Activated CD8-positive, alpha-beta T cell treated with anti-CD3 and anti-CD28 coated beads for 36 hours (primary cell): ENCODE measurements at regions of chr1 and their contacts with region 1.

Region 1: DNA sequence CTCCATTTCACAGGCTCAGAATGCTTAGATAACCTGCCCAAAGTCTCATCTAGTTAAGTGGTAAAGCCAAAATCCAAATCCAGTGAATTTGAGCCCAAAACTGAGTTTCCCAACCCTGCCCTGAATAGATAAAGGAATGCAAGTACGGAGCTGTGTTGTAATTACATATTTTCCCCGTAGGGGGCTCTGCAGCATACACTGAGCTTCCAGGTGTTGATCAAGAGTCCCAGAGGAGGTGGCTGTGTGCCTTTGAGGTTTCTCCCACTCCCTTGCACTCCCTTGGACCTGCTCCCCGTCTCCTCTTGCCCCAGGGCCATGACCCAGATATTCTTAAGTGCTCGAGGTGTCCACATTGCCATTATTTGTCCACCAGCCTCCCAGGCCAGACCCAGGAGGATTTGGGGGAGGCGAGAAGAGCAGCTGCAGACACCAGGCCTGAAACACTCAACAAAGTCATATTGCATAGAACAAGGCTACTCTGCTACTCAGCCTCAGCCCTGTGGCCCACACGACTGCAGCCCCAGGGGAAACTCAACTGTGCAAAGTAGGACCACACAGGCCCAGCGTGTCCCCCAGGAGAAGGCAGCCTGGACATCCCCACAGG is 18.4 kb upstream of the LY9 start:
- DNase-seq: peak; percentile 72
- ATAC-seq: peak; percentile 67
- H3K4me3 Mint-ChIP-seq: no peak overlapping the region
- H3K27ac Mint-ChIP-seq: peak overlapping the region; percentile 4
- H3K4me1 Mint-ChIP-seq: peaks cover 55% of the 10 kb centered on the region
- H3K27me3 Mint-ChIP-seq: no peaks in the 10 kb centered on the region
- CTCF ChIP-seq: peak; percentile 85

Region 2: DNA sequence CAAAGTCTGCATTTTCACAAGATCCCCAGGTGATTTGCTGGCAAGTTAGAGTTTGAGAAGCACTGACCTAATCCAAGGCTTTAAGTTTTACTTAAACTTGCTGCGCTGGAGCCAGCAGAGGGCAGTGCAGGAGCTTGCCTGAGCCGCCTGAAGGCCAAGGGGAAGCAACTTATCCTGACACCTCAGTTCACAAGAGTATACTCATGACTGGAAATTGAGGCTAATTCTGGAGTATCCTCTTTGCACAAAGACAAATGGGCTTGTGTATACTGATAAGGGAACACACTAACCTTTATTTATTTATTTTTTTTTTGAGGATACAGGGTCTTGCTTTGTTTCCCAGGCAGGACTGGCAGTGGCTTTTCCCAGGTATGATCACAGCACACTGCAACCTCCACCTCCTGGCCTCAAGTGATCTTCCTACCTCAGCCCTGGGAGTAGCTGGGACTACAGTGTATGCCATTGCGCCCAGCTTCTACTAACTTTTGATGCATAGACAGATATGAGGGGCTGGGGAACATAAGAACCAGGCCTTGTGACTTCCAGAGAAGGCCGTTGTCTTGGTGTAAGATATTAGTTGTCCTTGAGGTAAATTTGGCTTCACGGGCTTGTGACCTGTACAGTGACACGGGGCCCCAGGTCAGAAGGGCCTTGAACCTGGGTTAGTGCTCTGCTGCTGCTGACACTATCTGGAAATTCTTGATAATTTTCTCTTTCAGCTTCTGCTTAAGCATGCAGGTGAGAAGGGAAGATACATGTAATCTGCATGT is 101.8 kb before region 1 on chr1:
- CTCF ChIA-PET with region 1: interaction called, 15 read pairs
- POLR2A ChIA-PET with region 1: interaction called, 3 read pairs
- intact Hi-C with region 1: no loop called
- DNase-seq: peak; percentile 88
- ATAC-seq: peak; percentile 85
- H3K4me3 Mint-ChIP-seq: no peak overlapping the region
- H3K27ac Mint-ChIP-seq: peak overlapping the region; percentile 73
- H3K4me1 Mint-ChIP-seq: peaks cover 30% of the 10 kb centered on the region
- H3K27me3 Mint-ChIP-seq: no peaks in the 10 kb centered on the region
- CTCF ChIP-seq: peak; percentile 73

Region 3: GRCh38 chr1:160726498-160727315 is 50.9 kb before region 1 on chr1:
- CTCF ChIA-PET with region 1: interaction called, 138 read pairs
- POLR2A ChIA-PET with region 1: interaction called, 4 read pairs
- intact Hi-C with region 1: no loop called
- DNase-seq: peak; percentile 74
- ATAC-seq: peak; percentile 79
- H3K4me3 Mint-ChIP-seq: no peak overlapping the region
- H3K27ac Mint-ChIP-seq: no peak overlapping the region
- H3K4me1 Mint-ChIP-seq: peaks cover 32% of the 10 kb centered on the region
- H3K27me3 Mint-ChIP-seq: no peaks in the 10 kb centered on the region
- CTCF ChIP-seq: peak; percentile 99

Region 4: DNA sequence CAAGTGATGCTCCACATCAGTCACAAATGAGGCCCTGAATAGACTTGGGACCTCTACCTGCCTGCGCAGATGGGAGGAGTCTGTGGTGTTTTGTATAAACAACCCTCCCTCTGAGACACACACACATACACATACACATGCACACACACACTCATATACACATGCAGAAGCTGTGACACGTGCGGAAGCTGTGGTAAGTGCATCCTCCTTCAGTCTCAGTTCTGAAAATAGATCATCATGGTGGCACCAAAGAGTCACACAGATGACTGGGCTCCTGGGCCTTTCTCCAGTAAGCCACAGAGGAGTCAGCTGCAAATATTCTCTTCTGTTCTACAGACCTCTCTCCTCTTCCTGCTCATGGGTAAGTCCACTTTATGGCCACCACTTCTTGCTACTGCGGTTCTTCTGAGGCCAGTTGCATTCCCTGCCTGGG is 18.4 kb after region 1 on chr1 and contains the start of gene LY9:
- CTCF ChIA-PET with region 1: interaction called, 186 read pairs
- POLR2A ChIA-PET with region 1: interaction called, 9 read pairs
- intact Hi-C with region 1: no loop called
- DNase-seq: peak; percentile 93
- ATAC-seq: peak; percentile 77
- H3K4me3 Mint-ChIP-seq: peak within 1 kb of the TSS; percentile 87
- H3K27ac Mint-ChIP-seq: peak within 1 kb of the TSS; percentile 95
- H3K4me1 Mint-ChIP-seq: peaks cover 49% of the 10 kb centered on the region
- H3K27me3 Mint-ChIP-seq: no peaks in the 10 kb centered on the region
- CTCF ChIP-seq: no peak
- total RNA-seq, gene LY9: 19.1 to 19.5 TPM

Region 5: GRCh38 chr1:160821628-160822027 is 44.0 kb after region 1 on chr1:
- CTCF ChIA-PET with region 1: interaction called, 107 read pairs
- POLR2A ChIA-PET with region 1: no interaction called
- intact Hi-C with region 1: no loop called
- DNase-seq: peak; percentile 37
- ATAC-seq: no peak
- H3K4me3 Mint-ChIP-seq: no peak overlapping the region
- H3K27ac Mint-ChIP-seq: no peak overlapping the region
- H3K4me1 Mint-ChIP-seq: peaks cover 5% of the 10 kb centered on the region
- H3K27me3 Mint-ChIP-seq: no peaks in the 10 kb centered on the region
- CTCF ChIP-seq: no peak

Region 6: DNA sequence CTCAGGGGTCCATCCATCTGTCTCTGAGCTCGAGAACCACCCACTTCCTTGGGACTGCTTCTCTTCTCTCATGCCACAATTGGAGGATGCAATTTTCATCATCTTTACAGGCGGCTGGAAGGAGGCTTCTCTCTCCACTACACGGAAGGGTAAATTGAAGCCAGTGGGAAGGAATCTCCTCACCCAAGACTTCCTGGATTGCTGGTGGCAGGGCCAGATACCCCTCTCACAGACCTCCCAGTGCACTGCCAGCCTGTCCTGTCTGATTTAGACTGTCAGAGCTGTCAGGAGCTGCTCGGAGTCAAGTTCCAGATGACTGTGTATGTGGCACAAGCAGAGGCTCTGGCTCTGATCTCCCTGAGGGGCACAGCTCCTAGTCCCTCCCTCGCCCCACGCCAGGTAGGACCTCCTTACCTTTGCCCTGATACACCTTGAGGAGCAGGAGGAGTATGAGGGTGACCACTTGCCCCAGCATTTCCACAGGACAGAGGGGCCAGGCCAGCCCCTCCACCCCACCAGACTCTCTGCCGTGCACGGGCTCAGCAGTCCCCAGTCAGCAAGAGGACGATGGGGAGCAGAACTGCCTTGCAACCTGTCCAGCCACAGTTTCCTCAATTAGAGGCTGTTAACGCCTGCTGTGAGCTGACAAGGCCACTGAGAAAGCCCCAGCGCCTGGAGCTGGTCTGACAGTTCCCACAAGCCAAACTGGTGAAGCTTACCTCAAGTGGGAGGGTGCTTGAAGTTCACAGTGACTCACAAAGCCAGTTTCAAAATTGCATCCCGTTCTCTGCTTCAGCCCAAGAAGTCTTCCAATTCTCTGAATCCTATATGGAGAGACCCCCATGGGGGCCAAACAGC is 84.8 kb after region 1 on chr1 and contains the start of gene CD244:
- CTCF ChIA-PET with region 1: interaction called, 12 read pairs
- POLR2A ChIA-PET with region 1: no interaction called
- intact Hi-C with region 1: no loop called
- DNase-seq: peak; percentile 86
- ATAC-seq: peak; percentile 95
- H3K4me3 Mint-ChIP-seq: peak within 1 kb of the TSS; percentile 58
- H3K27ac Mint-ChIP-seq: peak within 1 kb of the TSS; percentile 67
- H3K4me1 Mint-ChIP-seq: peaks cover 32% of the 10 kb centered on the region
- H3K27me3 Mint-ChIP-seq: no peaks in the 10 kb centered on the region
- CTCF ChIP-seq: no peak
- total RNA-seq, gene CD244: 1.4 to 1.8 TPM